A673 (cell line): ENCODE measurements at regions of chr13 and their contacts with region 1.

Region 1: GRCh38 chr13:59607780-59608233 is 555.9 kb downstream of the DIAPH3 start:
- DNase-seq: no peak
- H3K4me3 ChIP-seq: no peak overlapping the region
- H3K27ac ChIP-seq: no peak overlapping the region
- H3K4me1 ChIP-seq: no peaks in the 10 kb centered on the region
- H3K27me3 ChIP-seq: no peaks in the 10 kb centered on the region
- CTCF ChIP-seq: no peak

Region 2: DNA sequence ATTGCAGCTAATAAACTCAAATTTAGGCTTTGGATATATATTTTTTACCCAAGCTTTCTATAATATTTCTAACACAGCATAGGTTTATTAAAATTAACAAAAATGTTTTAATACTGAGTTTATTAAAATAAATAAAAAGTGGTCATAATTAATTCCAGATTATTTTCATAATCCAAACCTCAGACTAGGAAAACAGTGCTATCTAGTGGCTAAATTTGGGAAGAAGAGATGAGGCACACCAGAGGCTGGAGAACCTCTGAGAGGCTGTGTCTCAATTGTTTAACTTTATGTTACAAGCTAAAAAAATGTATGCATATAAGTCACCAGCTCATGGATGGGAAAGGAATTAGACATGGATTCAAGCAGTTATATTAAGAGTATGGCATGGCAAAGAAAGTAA is 163.5 kb after region 1 on chr13:
- CTCF ChIA-PET with region 1: no interaction called
- POLR2A ChIA-PET with region 1: interaction called, 10 read pairs
- intact Hi-C with region 1: no loop called
- DNase-seq: peak; percentile 73
- H3K4me3 ChIP-seq: no peak overlapping the region
- H3K27ac ChIP-seq: peak overlapping the region; percentile 70
- H3K4me1 ChIP-seq: peaks cover 83% of the 10 kb centered on the region
- H3K27me3 ChIP-seq: no peaks in the 10 kb centered on the region
- CTCF ChIP-seq: peak; percentile 80